HEK293T (cell line): ENCODE measurements at regions of chr1 and their contacts with region 1.

Region 1: GRCh38 chr1:242623119-242623518 is 98.6 kb upstream of the PLD5 start:
- DNase-seq: no peak

Region 2: DNA sequence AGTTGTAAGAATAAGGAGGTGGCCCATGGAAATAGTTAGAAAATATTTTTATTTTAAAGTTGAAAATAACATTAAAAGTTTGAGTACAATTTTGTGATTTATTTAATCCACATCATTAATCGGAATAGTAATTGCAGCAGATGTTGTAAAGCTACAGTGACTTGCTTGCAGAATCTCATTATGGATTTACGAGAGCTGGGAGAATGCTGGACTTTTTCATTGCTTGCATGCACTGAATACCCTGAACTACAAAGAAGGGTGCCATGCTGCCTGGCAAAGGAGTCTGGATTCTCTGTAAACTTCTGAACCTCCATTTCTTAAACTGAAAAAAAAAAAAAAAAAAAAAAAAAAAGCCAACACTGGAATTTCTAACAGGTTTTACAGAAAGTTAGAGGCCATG is 944.6 kb before region 1 on chr1:
- CTCF ChIA-PET with region 1: interaction called, 11 read pairs
- POLR2A ChIA-PET with region 1: no interaction called
- DNase-seq: no peak

Region 3: DNA sequence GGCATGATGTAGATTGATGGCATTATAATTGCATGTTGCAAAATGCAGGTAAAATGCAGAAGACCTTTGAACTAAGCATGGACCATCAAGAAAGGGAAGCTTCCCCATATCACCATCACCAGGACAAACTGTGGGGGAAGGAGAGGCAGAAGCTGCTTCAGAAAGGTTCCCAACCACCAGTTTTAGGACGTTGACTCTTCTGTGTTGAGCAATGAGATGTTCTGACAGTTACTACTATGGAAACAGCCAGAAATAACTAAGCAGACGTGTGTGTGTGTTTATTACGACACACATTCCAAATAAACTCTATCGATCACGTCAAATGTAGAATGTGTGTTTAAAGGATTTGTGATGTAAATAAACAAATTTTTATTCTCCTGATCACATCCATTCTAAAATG is 11.6 kb after region 1 on chr1:
- CTCF ChIA-PET with region 1: no interaction called
- POLR2A ChIA-PET with region 1: no interaction called
- DNase-seq: no peak

Region 4: GRCh38 chr1:242692988-242693387 is 69.9 kb after region 1 on chr1:
- CTCF ChIA-PET with region 1: no interaction called
- POLR2A ChIA-PET with region 1: no interaction called
- DNase-seq: no peak